ENCODE measurements at regions of chr2 and their contacts with region 1.

Region 1: GRCh38 chr2:3536682-3537632 is 17.6 kb upstream of the ADI1 start:
- DNase-seq: peak; percentile 82
- ATAC-seq: peak; percentile 89
- H3K4me3 ChIP-seq: peak overlapping the region; percentile 59 to 79 (median 73)
- H3K27ac ChIP-seq: peak overlapping the region; percentile 92
- H3K4me1 ChIP-seq: peaks cover 41% of the 10 kb centered on the region
- H3K27me3 ChIP-seq: no peaks in the 10 kb centered on the region; a peak in 1 of 5 replicates
- CTCF ChIP-seq: peak; percentile 82
- EP300 ChIP-seq: no peak
- POLR2A ChIP-seq: no peak; a peak in 1 of 4 replicates
- RAD21 ChIP-seq: peak; percentile 71

Region 2: GRCh38 chr2:3409627-3410170 is 127.3 kb before region 1 on chr2:
- CTCF ChIA-PET with region 1: no interaction called
- POLR2A ChIA-PET with region 1: no interaction called
- in situ Hi-C with region 1: no loop called
- intact Hi-C with region 1: no loop called
- DNase-seq: no peak
- ATAC-seq: no peak
- H3K4me3 ChIP-seq: no peak overlapping the region
- H3K27ac ChIP-seq: no peak overlapping the region
- H3K4me1 ChIP-seq: no peaks in the 10 kb centered on the region
- H3K27me3 ChIP-seq: no peaks in the 10 kb centered on the region
- CTCF ChIP-seq: no peak
- EP300 ChIP-seq: no peak
- POLR2A ChIP-seq: no peak
- RAD21 ChIP-seq: no peak

Region 3: GRCh38 chr2:3423492-3424175 is 113.3 kb before region 1 on chr2:
- CTCF ChIA-PET with region 1: no interaction called
- POLR2A ChIA-PET with region 1: interaction called, 6 read pairs
- in situ Hi-C with region 1: no loop called
- intact Hi-C with region 1: loop called (anchors 1 kb)
- DNase-seq: peak; percentile 83
- ATAC-seq: peak; percentile 87
- H3K4me3 ChIP-seq: no peak overlapping the region
- H3K27ac ChIP-seq: peak overlapping the region; percentile 32
- H3K4me1 ChIP-seq: peaks cover 16% of the 10 kb centered on the region
- H3K27me3 ChIP-seq: no peaks in the 10 kb centered on the region
- CTCF ChIP-seq: peak; percentile 98
- EP300 ChIP-seq: no peak
- POLR2A ChIP-seq: no peak
- RAD21 ChIP-seq: peak; percentile 73

Region 4: DNA sequence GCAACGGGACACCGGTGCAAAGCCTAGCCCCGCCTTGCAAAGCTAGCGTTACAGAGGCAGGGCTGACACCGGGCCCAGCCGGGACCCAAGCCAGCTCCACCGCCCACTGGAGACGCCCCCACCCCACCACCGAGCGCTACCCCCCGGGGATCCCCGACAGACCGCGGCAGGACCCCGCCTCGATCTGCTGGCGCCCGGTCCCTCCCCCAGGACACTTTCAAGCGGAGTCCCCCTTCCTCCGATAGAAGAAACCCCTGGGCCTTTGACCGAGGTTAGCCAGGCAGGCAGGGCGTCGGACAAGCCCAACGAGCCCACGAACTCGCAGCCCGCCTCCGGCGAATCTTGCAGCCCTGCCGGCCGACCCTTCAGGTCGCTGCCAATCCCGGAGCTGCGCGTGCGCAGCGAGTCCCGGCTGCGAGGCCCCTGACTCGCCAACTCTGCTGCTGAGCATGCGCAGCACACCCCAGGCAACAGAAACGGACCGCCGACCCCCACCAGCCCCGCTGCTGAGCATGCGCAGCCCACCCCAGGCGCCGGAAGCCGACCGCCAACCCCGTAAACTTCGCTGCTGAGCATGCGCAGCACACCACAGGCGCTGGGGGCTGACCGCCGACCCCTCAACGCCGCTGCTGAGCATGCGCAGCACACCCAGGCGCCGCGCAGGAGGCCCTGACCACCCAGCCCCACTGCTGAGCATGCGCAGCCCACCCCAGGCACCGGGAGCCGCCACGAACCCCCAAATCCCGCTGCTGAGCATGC is 18.3 kb before region 1 on chr2:
- CTCF ChIA-PET with region 1: no interaction called
- POLR2A ChIA-PET with region 1: interaction called, 60 read pairs
- in situ Hi-C with region 1: no loop called
- intact Hi-C with region 1: loop called (anchors 1 kb)
- DNase-seq: peak; percentile 97
- ATAC-seq: peak; percentile 70
- H3K4me3 ChIP-seq: peak overlapping the region; percentile 67 to 88 (median 81)
- H3K27ac ChIP-seq: peak overlapping the region; percentile 96
- H3K4me1 ChIP-seq: peaks cover 74% of the 10 kb centered on the region
- H3K27me3 ChIP-seq: no peaks in the 10 kb centered on the region
- CTCF ChIP-seq: peak; percentile 17; the same call in 1 of the 2 replicates
- EP300 ChIP-seq: no peak
- POLR2A ChIP-seq: peak in 1 of 2 experiments; percentile 91; a peak in 2 of 4 replicates
- RAD21 ChIP-seq: peak; percentile 40

Region 5: GRCh38 chr2:3575534-3576262 is 38.7 kb after region 1 on chr2:
- CTCF ChIA-PET with region 1: no interaction called
- POLR2A ChIA-PET with region 1: interaction called, 6 read pairs
- in situ Hi-C with region 1: no loop called
- intact Hi-C with region 1: loop called (anchors 2 kb)
- DNase-seq: no peak
- ATAC-seq: peak; percentile 63
- H3K4me3 ChIP-seq: peak overlapping the region; percentile 89 to 100 (median 91)
- H3K27ac ChIP-seq: peak overlapping the region; percentile 84
- H3K4me1 ChIP-seq: peaks cover 63% of the 10 kb centered on the region
- H3K27me3 ChIP-seq: no peaks in the 10 kb centered on the region; a peak in 1 of 5 replicates
- CTCF ChIP-seq: no peak; the same call in 1 of the 2 replicates
- EP300 ChIP-seq: no peak
- POLR2A ChIP-seq: no peak
- RAD21 ChIP-seq: no peak

Region 6: DNA sequence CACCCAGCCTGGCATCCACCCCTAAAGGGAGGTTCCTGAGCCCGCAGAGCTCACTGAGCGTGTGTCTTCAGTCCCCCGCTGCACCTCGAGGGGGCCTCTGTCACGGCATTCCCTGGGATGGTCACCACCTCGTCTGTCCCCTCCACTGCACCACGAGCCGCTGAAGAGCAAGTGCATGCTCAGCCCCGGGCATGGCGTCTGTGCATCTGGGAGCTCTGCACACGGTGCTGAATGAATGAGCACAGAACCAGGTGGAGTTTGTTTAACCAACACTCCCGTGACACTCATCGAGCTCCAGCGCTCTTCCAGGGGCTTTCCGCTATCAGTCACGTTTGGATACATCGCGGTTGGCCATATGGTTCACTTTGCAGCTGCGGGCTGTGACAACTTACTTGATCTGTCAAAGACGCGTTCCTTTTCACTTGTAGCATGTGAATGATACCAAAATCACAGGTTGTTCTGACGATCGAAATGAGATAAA is 130.2 kb after region 1 on chr2:
- CTCF ChIA-PET with region 1: no interaction called
- POLR2A ChIA-PET with region 1: no interaction called
- in situ Hi-C with region 1: no loop called
- intact Hi-C with region 1: no loop called
- DNase-seq: no peak
- ATAC-seq: peak; percentile 52
- H3K4me3 ChIP-seq: no peak overlapping the region
- H3K27ac ChIP-seq: no peak overlapping the region
- H3K4me1 ChIP-seq: peaks cover 28% of the 10 kb centered on the region
- H3K27me3 ChIP-seq: peaks cover 3 to 17% of the 10 kb centered on the region in 2 experiments; a peak in 3 of 5 replicates
- CTCF ChIP-seq: no peak
- EP300 ChIP-seq: no peak
- POLR2A ChIP-seq: no peak
- RAD21 ChIP-seq: no peak

Region 7: DNA sequence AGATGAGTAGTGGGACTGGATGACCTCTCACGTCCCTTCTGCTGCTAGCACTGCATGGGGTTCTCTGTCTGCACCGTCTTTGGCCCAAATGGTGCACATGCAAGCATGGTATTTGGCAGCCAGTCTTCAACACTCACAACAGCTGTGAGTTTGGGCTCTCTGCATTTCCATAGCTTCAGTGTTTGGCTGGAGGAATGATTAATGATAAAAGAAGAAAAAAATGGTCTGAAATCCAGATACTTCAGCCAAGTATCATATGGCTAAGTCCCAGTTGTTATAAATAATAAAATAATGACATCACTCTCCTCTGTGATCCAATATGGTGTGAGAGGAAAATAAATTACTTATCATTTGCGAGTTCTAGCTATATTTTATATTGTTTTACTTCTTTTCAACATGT is 339.7 kb after region 1 on chr2:
- CTCF ChIA-PET with region 1: no interaction called
- POLR2A ChIA-PET with region 1: no interaction called
- in situ Hi-C with region 1: no loop called
- intact Hi-C with region 1: no loop called
- DNase-seq: no peak
- ATAC-seq: no peak
- H3K4me3 ChIP-seq: no peak overlapping the region
- H3K27ac ChIP-seq: no peak overlapping the region
- H3K4me1 ChIP-seq: no peaks in the 10 kb centered on the region
- H3K27me3 ChIP-seq: peaks cover 2 to 20% of the 10 kb centered on the region in 2 experiments; a peak in 2 of 5 replicates
- CTCF ChIP-seq: no peak
- EP300 ChIP-seq: no peak
- POLR2A ChIP-seq: no peak
- RAD21 ChIP-seq: no peak